CD8-positive, alpha-beta T cell (primary cell): ENCODE measurements at regions of chr13 and their contacts with region 1.

Region 1: DNA sequence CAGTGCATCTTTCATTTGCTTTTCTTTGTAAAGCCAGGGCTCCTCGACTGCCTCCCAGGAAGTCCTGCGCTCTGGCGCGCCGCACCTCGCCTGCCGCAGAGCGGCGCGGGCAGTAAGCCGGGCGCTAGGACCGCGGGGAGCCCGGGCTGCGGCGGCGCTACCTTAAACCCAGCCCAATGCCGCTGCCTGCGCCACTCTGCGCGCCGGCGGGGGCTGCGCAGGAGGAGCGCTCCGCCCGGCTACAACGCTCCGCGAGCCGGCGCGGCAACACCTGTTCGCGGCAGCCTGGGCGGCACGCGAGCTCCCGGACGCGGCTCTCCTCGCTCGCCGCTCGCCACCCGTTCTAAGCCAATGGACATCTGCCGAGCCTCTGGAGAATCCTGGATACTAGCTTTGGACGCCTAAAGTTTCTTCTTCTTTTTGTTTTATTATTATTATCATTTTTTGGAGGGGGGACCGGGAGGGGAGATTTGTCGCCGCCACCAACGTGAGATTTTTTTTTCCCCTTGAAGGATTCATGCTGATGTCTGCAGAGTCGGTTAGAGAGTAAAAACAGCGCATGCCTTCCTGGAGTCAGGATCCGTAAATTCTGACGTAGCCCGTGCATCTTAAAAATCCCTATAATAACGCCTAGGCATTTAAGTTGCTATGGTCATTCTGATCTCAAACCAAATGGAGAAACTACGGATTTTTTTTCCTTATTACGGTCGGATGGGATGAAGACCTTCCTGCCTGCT is at the start of gene FGF9:
- DNase-seq: peak; percentile 57 to 93 (median 78)
- ATAC-seq: peak; percentile 66
- H3K4me3 ChIP-seq: peak within 1 kb of the TSS; percentile 67 to 80
- H3K4me3 Mint-ChIP-seq: peak within 1 kb of the TSS; percentile 88
- H3K27ac ChIP-seq: peak within 1 kb of the TSS; percentile 32 to 56
- H3K27ac Mint-ChIP-seq: peak within 1 kb of the TSS; percentile 88
- H3K4me1 ChIP-seq: peaks cover 30% of the 10 kb centered on the region
- H3K4me1 Mint-ChIP-seq: peaks cover 49% of the 10 kb centered on the region
- H3K27me3 ChIP-seq: peaks cover 0 to 4% of the 10 kb centered on the region in 2 experiments
- H3K27me3 Mint-ChIP-seq: peaks cover 10% of the 10 kb centered on the region
- CTCF ChIP-seq: no peak
- total RNA-seq, gene FGF9: 7.6 to 8.2 TPM

Region 2: DNA sequence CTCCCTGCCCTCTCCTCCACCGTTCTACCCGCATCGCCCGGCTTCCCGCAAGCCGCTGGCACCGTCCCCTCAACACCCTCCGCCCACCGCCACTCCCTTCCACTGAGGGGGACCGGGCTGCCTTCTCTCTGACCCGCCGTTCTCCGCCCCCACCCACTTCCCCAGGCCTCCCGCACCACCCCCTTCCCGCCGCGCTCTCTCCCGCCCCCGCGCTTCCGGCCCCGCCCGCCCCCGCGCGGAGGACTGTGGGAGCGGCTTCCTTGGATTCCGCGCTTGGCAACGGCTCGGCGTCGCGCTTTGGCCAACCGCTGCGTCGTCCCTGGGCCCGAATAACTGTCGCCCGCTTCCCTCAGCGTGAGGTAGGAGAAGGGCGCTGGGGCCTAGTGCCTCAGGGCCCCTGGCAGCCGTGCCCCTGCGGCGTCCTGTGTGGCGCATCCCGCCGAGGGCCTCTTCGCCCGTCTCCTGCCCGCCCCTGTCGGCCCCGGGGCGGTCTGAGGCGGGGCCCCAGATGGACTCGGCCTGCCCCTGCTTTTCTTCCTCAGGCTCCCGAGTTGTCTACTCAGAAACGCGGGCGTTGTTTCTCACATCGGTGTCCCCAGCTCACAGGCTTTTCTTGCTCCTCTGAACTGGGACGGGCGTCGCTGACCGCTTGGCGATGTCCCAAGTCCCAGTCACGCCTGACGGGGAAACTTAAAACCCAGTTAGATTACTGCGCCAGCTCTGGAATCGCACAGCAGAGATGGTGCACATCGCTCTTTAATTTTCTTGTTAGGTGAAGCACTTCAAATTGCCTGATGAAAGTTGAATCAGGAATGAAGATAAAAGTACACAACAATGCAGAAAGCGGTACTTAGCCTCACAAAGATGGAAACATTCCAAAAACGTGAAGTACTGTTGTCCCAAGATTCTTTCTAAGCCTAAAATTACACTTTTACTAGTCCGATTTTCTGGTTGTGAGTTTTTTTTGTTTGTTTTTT is 1103.9 kb before region 1 on chr13 and contains the start of gene IFT88:
- CTCF ChIA-PET with region 1: no interaction called
- POLR2A ChIA-PET with region 1: no interaction called
- intact Hi-C with region 1: loop called in 1 of 2 experiments (anchors 2 kb)
- DNase-seq: peak; percentile 49 to 90 (median 80)
- ATAC-seq: peak; percentile 86
- H3K4me3 ChIP-seq: peak within 1 kb of the TSS; percentile 70 to 71
- H3K4me3 Mint-ChIP-seq: peak within 1 kb of the TSS; percentile 87
- H3K27ac ChIP-seq: peak within 1 kb of the TSS; percentile 70 to 77
- H3K27ac Mint-ChIP-seq: peak within 1 kb of the TSS; percentile 89
- H3K4me1 ChIP-seq: no peaks in the 10 kb centered on the region
- H3K4me1 Mint-ChIP-seq: peaks cover 17% of the 10 kb centered on the region
- H3K27me3 ChIP-seq: no peaks in the 10 kb centered on the region
- H3K27me3 Mint-ChIP-seq: no peaks in the 10 kb centered on the region
- CTCF ChIP-seq: no peak
- total RNA-seq, gene IFT88: 7.5 to 8.2 TPM

Region 3: GRCh38 chr13:21075011-21075898 is 595.8 kb before region 1 on chr13:
- CTCF ChIA-PET with region 1: no interaction called
- POLR2A ChIA-PET with region 1: no interaction called
- intact Hi-C with region 1: loop called in 1 of 2 experiments (anchors 5 kb)
- DNase-seq: peak in 7 of 9 experiments; percentile 10 to 61 (median 38)
- ATAC-seq: peak; percentile 70
- H3K4me3 ChIP-seq: peak overlapping the region; percentile 57 to 85
- H3K4me3 Mint-ChIP-seq: peak overlapping the region; percentile 76
- H3K27ac ChIP-seq: peak overlapping the region; percentile 47 to 66
- H3K27ac Mint-ChIP-seq: peak overlapping the region; percentile 86
- H3K4me1 ChIP-seq: peaks cover 11% of the 10 kb centered on the region
- H3K4me1 Mint-ChIP-seq: peaks cover 15% of the 10 kb centered on the region
- H3K27me3 ChIP-seq: no peaks in the 10 kb centered on the region
- H3K27me3 Mint-ChIP-seq: peaks cover 4% of the 10 kb centered on the region
- CTCF ChIP-seq: no peak

Region 4: DNA sequence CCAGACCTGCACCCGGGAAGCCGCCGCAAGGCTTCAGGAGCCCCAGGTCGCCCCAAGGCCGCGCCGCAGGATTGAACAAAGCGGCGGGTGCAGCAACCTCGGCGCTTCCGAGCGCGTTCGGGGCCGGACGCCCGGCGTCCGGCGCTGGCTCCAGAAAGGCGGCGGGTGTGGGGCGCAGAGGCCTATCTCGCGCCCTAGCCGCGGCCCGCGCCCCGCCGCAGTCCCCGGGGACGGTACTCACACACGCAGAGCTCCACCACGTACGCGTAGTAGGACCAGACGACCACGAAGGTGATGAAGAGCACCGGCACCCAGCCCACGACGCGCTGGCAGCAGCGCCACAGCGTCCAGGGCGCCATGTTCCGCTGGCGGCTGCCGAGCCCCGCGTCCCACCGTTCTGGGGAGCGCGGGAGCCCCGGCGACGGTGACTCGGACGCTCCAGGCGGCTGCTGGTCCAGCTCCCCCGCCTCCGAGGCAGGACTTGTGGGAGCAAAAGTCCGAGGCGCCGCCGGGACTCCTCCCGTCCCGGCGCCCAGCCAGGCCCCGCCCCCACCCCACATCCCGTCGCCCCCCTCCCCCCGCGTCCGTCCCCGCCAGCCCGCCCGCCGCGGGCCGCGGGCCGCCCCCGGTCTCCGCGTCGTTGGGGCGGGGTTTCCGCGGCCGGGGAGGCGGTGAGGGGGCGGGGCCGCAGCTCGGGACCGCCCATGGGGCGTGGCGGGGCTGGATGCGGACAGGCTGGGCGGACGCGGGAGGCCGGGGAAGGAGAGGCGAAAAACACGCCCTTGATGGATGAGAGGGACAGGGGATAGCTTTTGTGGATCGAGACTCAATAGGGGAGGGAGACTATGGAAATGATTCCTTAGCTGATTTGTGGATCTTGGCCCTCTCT is 212.0 kb before region 1 on chr13 and contains the start of gene ZDHHC20:
- CTCF ChIA-PET with region 1: no interaction called
- POLR2A ChIA-PET with region 1: no interaction called
- intact Hi-C with region 1: loop called in 1 of 2 experiments (anchors 5 kb)
- DNase-seq: peak; percentile 77 to 96 (median 90)
- ATAC-seq: peak; percentile 93
- H3K4me3 ChIP-seq: peak within 1 kb of the TSS; percentile 69 to 78
- H3K4me3 Mint-ChIP-seq: peak within 1 kb of the TSS; percentile 95
- H3K27ac ChIP-seq: peak within 1 kb of the TSS; percentile 80 to 89
- H3K27ac Mint-ChIP-seq: peak within 1 kb of the TSS; percentile 96
- H3K4me1 ChIP-seq: peaks cover 15% of the 10 kb centered on the region
- H3K4me1 Mint-ChIP-seq: peaks cover 45% of the 10 kb centered on the region
- H3K27me3 ChIP-seq: no peaks in the 10 kb centered on the region
- H3K27me3 Mint-ChIP-seq: no peaks in the 10 kb centered on the region
- CTCF ChIP-seq: no peak
- total RNA-seq, gene ZDHHC20: 81.0 to 81.1 TPM

Region 5: DNA sequence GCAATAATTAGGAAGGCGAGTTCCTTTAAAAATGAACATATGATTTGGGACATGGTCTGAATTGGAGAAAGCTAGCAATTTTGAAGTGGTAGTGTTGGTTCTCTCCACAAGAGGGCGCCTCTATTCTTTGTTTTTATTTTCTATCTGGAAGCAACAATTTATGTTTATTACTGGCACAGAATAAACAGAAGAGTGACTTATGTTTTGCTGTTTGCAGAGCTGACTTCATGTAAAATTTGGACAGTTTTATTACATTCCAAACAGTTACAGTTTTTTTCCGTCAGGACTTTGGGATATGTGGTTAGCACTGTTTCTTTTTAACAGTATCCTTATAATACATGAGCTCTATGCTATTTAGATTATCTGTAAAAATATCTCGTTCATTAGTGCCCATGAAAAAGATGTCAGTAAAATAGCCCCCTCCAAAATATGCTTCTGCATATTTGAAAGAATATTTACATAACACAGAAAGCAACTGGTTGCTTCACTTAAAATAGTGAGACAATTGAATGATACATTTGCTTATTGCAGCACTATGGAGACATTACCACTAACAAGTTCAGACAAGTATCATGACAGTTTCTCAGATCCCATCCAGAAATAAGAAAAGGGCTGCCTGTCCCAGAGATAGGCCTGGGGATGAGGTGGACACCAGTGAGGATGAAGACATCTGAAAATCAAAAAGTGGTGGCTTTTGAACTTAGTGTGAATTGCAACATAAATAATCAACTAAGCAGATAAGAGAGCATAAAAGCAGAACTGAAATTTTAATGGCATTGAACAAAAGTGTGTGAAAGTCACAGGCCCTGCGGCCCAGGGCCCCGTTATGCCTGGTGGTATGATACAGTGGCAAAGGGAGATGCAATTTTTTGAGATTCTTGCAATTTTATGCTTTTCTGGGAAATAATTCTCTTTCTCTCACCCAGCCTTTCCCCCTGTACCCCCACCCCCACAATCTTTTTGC is 32.5 kb before region 1 on chr13:
- CTCF ChIA-PET with region 1: interaction called, 63 read pairs
- POLR2A ChIA-PET with region 1: interaction called, 12 read pairs
- intact Hi-C with region 1: loop called in 1 of 2 experiments (anchors 1 kb)
- DNase-seq: peak in 6 of 9 experiments; percentile 5 to 57 (median 47)
- ATAC-seq: no peak
- H3K4me3 ChIP-seq: no peak overlapping the region
- H3K4me3 Mint-ChIP-seq: no peak overlapping the region
- H3K27ac ChIP-seq: no peak overlapping the region
- H3K27ac Mint-ChIP-seq: no peak overlapping the region
- H3K4me1 ChIP-seq: no peaks in the 10 kb centered on the region
- H3K4me1 Mint-ChIP-seq: no peaks in the 10 kb centered on the region
- H3K27me3 ChIP-seq: no peaks in the 10 kb centered on the region
- H3K27me3 Mint-ChIP-seq: peaks cover 6% of the 10 kb centered on the region
- CTCF ChIP-seq: peak; percentile 86

Region 6: GRCh38 chr13:21757763-21758162 is 86.7 kb after region 1 on chr13:
- CTCF ChIA-PET with region 1: no interaction called
- POLR2A ChIA-PET with region 1: no interaction called
- intact Hi-C with region 1: no loop called
- DNase-seq: no peak
- ATAC-seq: no peak
- H3K4me3 ChIP-seq: no peak overlapping the region
- H3K4me3 Mint-ChIP-seq: no peak overlapping the region
- H3K27ac ChIP-seq: no peak overlapping the region
- H3K27ac Mint-ChIP-seq: no peak overlapping the region
- H3K4me1 ChIP-seq: no peaks in the 10 kb centered on the region
- H3K4me1 Mint-ChIP-seq: no peaks in the 10 kb centered on the region
- H3K27me3 ChIP-seq: peaks cover 0 to under 1% of the 10 kb centered on the region in 2 experiments
- H3K27me3 Mint-ChIP-seq: peaks cover 4% of the 10 kb centered on the region
- CTCF ChIP-seq: no peak

Region 7: DNA sequence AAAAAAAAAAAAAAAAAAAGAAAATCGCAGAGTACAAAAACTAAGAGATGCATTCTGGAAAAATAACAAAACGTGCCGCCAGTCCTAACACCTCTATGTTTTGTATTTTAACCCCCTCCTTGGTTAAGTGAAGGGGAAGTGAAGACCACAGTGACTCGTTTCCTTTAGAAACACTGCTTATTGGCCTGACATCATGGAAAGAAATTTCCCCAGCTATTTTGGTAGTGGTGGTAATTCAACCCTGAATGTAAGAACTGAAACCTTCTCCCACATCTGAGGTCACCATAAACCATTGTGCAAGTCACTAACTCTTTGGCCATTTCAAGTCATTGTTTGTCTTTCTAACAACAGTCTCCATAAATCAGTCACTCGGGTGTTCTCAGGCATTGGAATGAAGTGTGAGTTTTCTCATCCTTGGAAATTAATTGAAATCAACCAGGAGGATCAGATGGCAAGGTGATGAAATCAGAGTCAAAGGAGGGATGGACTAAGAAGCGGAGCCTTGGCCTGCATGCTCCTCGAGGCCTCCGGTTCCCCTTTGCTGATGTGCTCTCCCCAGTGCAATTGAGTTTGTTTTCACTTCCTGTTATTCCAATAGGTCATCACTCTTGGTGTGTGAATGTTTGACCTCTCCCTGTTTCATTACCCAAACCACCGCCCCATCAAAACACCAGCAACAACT is 443.7 kb after region 1 on chr13:
- CTCF ChIA-PET with region 1: no interaction called
- POLR2A ChIA-PET with region 1: no interaction called
- intact Hi-C with region 1: loop called in 1 of 2 experiments (anchors 1 kb)
- DNase-seq: peak in 6 of 9 experiments; percentile 16 to 93 (median 46)
- ATAC-seq: peak; percentile 88
- H3K4me3 ChIP-seq: no peak overlapping the region
- H3K4me3 Mint-ChIP-seq: peak overlapping the region; percentile 4
- H3K27ac ChIP-seq: peak overlapping the region in 1 of 2 experiments; percentile 54
- H3K27ac Mint-ChIP-seq: peak overlapping the region; percentile 88
- H3K4me1 ChIP-seq: peaks cover 20% of the 10 kb centered on the region
- H3K4me1 Mint-ChIP-seq: peaks cover 36% of the 10 kb centered on the region
- H3K27me3 ChIP-seq: no peaks in the 10 kb centered on the region
- H3K27me3 Mint-ChIP-seq: no peaks in the 10 kb centered on the region
- CTCF ChIP-seq: no peak